Activated B cell treated with CpG ODN at 0.5 μM for 24 hours (primary cell): ENCODE measurements at regions of chr9 and their contacts with region 1.

Region 1: DNA sequence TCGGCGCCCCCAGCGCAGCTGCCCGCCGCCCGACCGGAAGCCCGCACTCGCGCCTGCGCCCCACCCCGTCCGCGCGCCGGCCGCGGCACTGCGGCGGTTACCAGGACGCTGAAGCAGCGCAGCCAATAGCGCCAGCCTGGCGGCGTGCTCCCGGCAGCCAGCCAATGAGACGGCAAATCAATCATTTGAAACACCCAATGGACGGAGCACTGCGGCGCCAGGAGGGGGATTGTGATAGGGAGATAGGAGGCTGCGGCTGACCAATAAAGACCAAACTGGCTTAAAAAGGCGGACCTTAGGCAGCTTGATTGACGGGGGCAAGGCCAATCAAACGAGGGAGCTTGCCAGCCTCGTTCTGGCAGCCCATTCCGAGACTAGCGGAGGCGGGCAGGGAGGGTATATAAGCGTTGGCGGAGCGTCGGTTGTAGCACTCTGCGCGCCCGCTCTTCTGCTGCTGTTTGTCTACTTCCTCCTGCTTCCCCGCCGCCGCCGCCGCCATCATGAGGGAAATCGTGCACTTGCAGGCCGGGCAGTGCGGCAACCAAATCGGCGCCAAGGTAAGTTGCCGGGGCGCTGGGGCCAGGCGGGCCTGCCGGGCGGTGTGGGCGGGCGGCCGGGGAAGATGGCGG is at the start of gene TUBB4B:
- DNase-seq: peak; percentile 95
- ATAC-seq: peak; percentile 75
- H3K4me3 Mint-ChIP-seq: peak within 1 kb of the TSS; percentile 88
- H3K27ac Mint-ChIP-seq: peak within 1 kb of the TSS; percentile 93
- H3K4me1 Mint-ChIP-seq: peaks cover 50% of the 10 kb centered on the region
- H3K27me3 Mint-ChIP-seq: no peaks in the 10 kb centered on the region
- CTCF ChIP-seq: no peak
- total RNA-seq, gene TUBB4B: 182 and 197 TPM in 2 replicates

Region 2: GRCh38 chr9:137046098-137046787 is 194.7 kb before region 1 on chr9 and contains the start of gene NPDC1:
- CTCF ChIA-PET with region 1: interaction called, 8 read pairs
- POLR2A ChIA-PET with region 1: interaction called, 6 read pairs
- intact Hi-C with region 1: loop called (anchors 1 kb)
- DNase-seq: peak; percentile 76
- ATAC-seq: peak; percentile 93
- H3K4me3 Mint-ChIP-seq: peak within 1 kb of the TSS; percentile 2
- H3K27ac Mint-ChIP-seq: no peak within 1 kb of the TSS
- H3K4me1 Mint-ChIP-seq: peaks cover 16% of the 10 kb centered on the region
- H3K27me3 Mint-ChIP-seq: peaks cover 34% of the 10 kb centered on the region
- CTCF ChIP-seq: peak; percentile 72
- total RNA-seq, gene NPDC1: 0.18 TPM in 1 of 2 replicates, not detected in the other

Region 3: DNA sequence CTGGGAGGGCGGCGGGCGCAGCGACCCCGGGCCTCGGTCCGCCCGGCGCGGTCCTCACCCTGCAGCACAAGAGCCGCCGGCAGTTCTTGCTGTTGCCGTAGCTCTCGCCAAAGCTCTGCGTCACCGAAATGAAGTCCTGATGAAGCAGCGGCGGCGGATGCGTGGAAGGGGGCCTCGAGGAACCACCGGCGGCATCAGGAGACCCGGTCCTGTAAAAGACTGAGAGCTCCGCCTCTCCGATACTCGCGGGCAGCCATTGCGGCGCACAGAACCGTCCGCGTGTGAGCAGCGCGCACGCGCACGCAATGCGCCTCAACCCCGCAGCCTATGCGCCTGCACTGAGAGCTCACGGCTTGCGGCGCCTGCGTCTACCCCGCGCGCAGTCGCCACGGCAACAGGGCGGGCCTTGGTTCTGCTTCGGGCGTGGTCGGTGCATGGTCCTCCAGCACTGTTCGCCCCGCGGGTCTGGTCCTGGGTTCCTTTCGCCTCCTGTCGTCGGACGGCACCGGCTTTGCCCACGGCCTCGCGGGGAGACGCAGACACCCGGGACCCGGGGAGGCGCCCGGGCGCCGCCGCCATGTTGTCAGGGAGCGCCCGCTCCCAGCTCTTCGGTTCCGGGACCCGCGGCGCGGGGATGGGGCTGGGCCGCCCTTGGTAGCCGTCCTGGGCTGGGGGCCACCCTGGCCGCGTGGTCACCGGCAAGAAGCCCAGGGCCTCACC is 111.4 kb before region 1 on chr9:
- CTCF ChIA-PET with region 1: interaction called, 3 read pairs
- POLR2A ChIA-PET with region 1: interaction called, 42 read pairs
- intact Hi-C with region 1: no loop called
- DNase-seq: peak; percentile 88
- ATAC-seq: peak; percentile 95
- H3K4me3 Mint-ChIP-seq: peak overlapping the region; percentile 82
- H3K27ac Mint-ChIP-seq: peak overlapping the region; percentile 80
- H3K4me1 Mint-ChIP-seq: peaks cover 32% of the 10 kb centered on the region
- H3K27me3 Mint-ChIP-seq: peaks cover 2% of the 10 kb centered on the region
- CTCF ChIP-seq: no peak

Region 4: GRCh38 chr9:137200311-137201204 is 40.4 kb before region 1 on chr9 and contains the start of gene TPRN:
- CTCF ChIA-PET with region 1: interaction called, 4 read pairs
- POLR2A ChIA-PET with region 1: interaction called, 13 read pairs
- intact Hi-C with region 1: loop called (anchors 1 kb)
- DNase-seq: peak; percentile 92
- ATAC-seq: peak; percentile 95
- H3K4me3 Mint-ChIP-seq: peak within 1 kb of the TSS; percentile 83
- H3K27ac Mint-ChIP-seq: peak within 1 kb of the TSS; percentile 79
- H3K4me1 Mint-ChIP-seq: peaks cover 39% of the 10 kb centered on the region
- H3K27me3 Mint-ChIP-seq: no peaks in the 10 kb centered on the region
- CTCF ChIP-seq: no peak
- total RNA-seq, gene TPRN: 9.3 and 11.4 TPM in 2 replicates

Region 5: GRCh38 chr9:137262909-137263285 is 21.9 kb after region 1 on chr9:
- CTCF ChIA-PET with region 1: interaction called, 13 read pairs
- POLR2A ChIA-PET with region 1: interaction called, 13 read pairs
- intact Hi-C with region 1: loop called (anchors 2 kb)
- DNase-seq: no peak
- ATAC-seq: no peak
- H3K4me3 Mint-ChIP-seq: no peak overlapping the region
- H3K27ac Mint-ChIP-seq: no peak overlapping the region
- H3K4me1 Mint-ChIP-seq: peaks cover 11% of the 10 kb centered on the region
- H3K27me3 Mint-ChIP-seq: no peaks in the 10 kb centered on the region
- CTCF ChIP-seq: no peak

Region 6: DNA sequence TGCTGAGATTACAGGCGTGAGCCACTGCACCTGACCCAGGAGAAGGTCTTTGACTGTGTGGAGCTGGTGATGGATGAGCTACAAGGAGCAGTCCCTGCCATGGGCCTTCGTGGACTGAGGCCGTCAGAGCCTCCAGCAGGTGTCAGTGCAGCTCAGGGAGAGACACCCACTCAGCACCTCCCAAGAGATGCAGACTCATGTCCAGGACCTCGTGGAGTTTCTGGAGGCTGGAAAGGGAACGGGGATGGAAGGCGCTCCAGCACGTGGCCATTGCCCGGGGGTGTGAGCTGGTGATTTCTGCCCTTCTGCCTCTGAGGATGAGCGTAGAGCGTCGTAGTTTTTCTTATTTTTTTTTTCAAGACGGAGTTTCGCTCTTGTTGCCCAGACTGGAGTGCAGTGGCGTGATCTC is 46.0 kb after region 1 on chr9:
- CTCF ChIA-PET with region 1: interaction called, 5 read pairs
- POLR2A ChIA-PET with region 1: interaction called, 6 read pairs
- intact Hi-C with region 1: loop called (anchors 2 kb)
- DNase-seq: no peak
- ATAC-seq: peak; percentile 30
- H3K4me3 Mint-ChIP-seq: no peak overlapping the region
- H3K27ac Mint-ChIP-seq: peak overlapping the region; percentile 81
- H3K4me1 Mint-ChIP-seq: peaks cover 30% of the 10 kb centered on the region
- H3K27me3 Mint-ChIP-seq: no peaks in the 10 kb centered on the region
- CTCF ChIP-seq: no peak

Region 7: DNA sequence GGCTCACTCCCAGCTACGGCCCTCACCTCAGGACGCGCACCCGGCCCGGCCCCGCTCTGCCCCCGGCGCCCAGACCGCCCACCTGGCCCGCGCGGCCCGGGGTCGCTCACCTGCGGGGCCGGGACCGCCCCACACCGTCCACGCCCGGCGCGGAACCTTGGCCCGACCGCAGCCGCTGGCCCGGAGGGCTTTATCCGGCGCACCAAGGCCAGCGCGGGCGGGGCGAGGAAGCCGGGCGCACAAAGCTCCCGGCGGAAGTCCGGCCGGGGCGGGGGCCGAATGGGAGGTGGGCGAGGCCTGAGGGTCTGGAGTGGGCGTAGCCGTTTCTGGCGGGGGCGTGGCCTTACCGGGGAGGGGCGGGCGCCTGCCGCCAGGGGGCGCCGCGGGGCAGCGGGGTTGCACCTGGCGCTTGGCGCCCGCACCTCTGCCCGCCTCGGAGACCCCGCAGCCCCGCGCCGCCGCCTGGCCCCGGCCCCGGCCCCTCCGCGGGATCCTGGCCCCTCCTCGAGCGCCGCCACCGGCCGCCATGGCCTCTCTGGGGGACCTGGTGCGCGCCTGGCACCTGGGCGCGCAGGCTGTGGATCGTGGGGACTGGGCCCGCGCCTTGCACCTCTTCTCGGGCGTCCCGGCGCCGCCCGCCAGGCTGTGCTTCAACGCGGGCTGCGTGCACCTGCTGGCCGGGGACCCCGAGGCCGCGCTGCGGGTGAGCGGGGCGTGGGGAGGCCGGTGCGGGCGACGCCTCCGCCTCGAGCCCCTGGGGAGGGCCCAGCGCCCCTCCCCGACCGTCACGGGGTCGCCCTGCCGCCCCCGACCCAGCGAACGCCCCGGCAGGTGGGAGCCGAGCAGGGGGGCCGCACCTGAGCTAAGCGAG is 182.3 kb after region 1 on chr9 and contains the starts of genes EXD3 and NOXA1:
- CTCF ChIA-PET with region 1: no interaction called
- POLR2A ChIA-PET with region 1: interaction called, 8 read pairs
- intact Hi-C with region 1: loop called (anchors 5 kb)
- DNase-seq: peak; percentile 97
- ATAC-seq: peak; percentile 95
- H3K4me3 Mint-ChIP-seq: peak within 1 kb of the TSS; percentile 81
- H3K27ac Mint-ChIP-seq: peak within 1 kb of the TSS; percentile 24
- H3K4me1 Mint-ChIP-seq: peaks cover 13% of the 10 kb centered on the region
- H3K27me3 Mint-ChIP-seq: no peaks in the 10 kb centered on the region
- CTCF ChIP-seq: no peak
- total RNA-seq, gene EXD3: 8.4 and 12.8 TPM in 2 replicates
- total RNA-seq, gene NOXA1: 2.6 and 3.9 TPM in 2 replicates